PC-3 (cell line): ENCODE measurements at regions of chr19 and their contacts with region 1.

Region 1: DNA sequence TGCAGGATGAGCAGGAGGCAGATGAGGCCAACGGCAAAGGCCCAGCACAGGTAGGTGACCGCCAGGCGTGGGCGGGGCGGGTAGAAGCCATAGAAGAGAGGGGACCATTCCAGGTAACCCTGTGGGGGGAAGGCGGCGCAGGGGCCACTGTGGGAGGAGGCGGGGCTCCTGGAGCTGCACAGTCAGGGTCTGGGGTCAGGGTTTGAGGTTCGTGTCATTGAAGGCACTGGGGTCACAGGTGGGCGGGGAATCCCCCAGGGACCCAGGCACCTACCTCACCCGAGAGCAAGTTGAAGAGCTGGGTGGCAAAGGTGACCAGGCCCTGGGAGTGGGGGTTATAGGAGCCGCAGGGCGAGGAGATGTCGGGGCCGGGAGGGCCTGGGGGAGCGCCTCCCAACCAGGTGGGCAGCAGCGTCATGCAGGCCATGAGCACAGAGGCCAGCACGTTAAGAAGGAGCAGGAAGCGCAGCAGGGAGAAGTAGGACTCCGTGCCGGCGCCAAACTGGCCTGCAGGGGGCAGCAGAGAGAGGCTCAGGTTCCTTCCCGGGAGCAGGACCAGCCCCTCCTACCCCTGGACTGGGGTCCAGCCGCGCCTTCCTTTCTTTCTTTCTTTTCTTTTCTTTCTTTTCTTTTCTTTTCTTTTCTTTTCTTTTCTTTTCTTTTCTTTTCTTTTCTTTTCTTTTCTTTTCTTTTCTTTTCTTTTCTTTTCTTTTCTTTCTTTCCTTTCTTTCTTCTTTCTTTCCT is 4.6 kb downstream of the TMC4 start:
- DNase-seq: peak; percentile 95
- ATAC-seq: peak; percentile 61
- H3K4me3 ChIP-seq: no peak overlapping the region
- H3K27ac ChIP-seq: no peak overlapping the region
- H3K4me1 ChIP-seq: peaks cover 12% of the 10 kb centered on the region
- H3K27me3 ChIP-seq: no peaks in the 10 kb centered on the region
- CTCF ChIP-seq: peak; percentile 76

Region 2: DNA sequence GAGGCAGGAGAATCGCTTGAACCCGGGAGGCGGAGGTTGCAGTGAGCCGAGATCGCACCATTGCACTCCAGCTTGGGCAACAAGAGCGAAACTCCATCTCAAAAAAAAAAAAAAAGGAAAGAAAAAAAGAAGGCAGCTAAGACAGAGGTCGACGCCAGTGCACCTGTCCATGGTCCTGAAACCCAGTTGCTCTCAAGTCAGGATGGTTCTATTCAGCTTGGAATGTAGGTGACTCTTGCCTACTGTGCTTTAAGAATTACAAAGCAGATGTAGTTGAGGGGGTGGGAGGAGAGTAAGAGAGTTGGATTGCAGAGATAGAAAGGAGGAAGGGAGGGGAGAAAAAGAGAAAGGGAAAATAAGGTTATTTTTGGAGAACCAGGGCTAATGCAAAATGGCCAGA is 240.6 kb before region 1 on chr19:
- CTCF ChIA-PET with region 1: no interaction called
- POLR2A ChIA-PET with region 1: no interaction called
- intact Hi-C with region 1: no loop called
- DNase-seq: peak; percentile 78
- ATAC-seq: peak; percentile 54; the same call in 1 of the 2 replicates
- H3K4me3 ChIP-seq: no peak overlapping the region
- H3K27ac ChIP-seq: no peak overlapping the region
- H3K4me1 ChIP-seq: no peaks in the 10 kb centered on the region
- H3K27me3 ChIP-seq: peaks cover 8% of the 10 kb centered on the region
- CTCF ChIP-seq: no peak

Region 3: GRCh38 chr19:54081032-54081431 is 87.3 kb before region 1 on chr19 and contains the start of gene TARM1:
- CTCF ChIA-PET with region 1: no interaction called
- POLR2A ChIA-PET with region 1: no interaction called
- intact Hi-C with region 1: no loop called
- DNase-seq: no peak
- ATAC-seq: no peak
- H3K4me3 ChIP-seq: no peak within 1 kb of the TSS
- H3K27ac ChIP-seq: no peak within 1 kb of the TSS
- H3K4me1 ChIP-seq: no peaks in the 10 kb centered on the region
- H3K27me3 ChIP-seq: no peaks in the 10 kb centered on the region
- CTCF ChIP-seq: no peak
- total RNA-seq, gene TARM1: not detected in 2 replicates

Region 4: DNA sequence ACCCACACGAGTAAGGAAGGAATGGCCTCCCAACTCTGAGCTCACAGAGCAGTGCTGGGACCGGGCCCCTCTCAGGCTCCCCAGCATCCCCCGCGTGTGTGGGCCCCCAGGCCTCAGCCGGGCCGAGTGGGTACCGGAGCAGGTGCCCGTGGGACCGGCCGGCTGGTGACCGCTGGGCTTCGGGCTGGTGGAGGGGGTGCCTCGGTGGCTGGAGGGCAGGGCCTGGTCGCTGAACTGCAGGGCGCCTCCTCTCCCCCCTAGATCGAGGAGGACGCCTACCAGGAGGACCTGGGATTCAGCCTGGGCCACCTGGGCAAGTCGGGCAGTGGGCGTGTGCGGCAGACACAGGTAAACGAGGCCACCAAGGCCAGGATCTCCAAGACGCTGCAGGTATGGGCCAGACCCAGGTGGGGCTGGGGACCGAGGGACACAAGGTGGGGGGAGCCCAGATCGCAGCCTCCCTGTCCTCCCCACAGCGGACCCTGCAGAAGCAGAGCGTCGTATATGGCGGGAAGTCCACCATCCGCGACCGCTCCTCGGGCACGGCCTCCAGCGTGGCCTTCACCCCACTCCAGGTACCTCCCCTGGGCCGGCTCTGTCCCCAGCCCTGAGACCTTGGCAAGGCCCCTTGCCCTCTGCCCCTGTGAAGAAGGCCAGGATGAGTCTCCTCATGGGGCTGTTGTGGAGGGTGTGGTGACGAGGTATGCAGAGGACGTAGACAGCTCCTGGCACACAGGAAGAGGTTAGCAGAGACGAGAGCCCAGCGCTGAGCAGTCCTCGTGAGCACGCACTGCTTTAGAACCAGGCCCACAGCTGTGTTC is 39.3 kb before region 1 on chr19:
- CTCF ChIA-PET with region 1: no interaction called
- POLR2A ChIA-PET with region 1: interaction called, 11 read pairs
- intact Hi-C with region 1: no loop called
- DNase-seq: no peak
- ATAC-seq: no peak
- H3K4me3 ChIP-seq: no peak overlapping the region
- H3K27ac ChIP-seq: no peak overlapping the region
- H3K4me1 ChIP-seq: no peaks in the 10 kb centered on the region
- H3K27me3 ChIP-seq: no peaks in the 10 kb centered on the region
- CTCF ChIP-seq: no peak

Region 5: DNA sequence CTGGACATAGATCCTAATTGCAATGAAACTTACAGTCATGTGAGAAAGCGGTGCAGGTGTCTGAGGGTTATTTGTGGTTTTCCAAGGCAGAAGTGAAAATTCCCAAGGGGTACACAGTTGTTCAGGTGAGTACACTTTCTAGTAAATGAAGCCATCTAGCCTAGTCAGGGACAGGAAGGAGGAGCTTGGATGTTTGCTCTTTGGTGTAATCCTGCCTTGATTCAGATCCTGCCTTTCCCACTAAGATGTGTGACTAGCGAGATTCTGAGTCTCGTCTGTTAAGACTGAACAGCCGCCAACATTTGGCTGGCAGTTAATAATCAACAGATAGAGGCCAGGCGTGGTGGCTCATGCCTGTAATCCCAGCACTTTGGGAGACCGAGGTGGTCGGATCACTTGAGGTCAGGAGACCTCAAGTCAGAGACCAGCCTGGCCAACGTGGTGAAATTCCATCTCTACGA is 34.8 kb after region 1 on chr19:
- CTCF ChIA-PET with region 1: interaction called, 4 read pairs
- POLR2A ChIA-PET with region 1: interaction called, 19 read pairs
- intact Hi-C with region 1: loop called (anchors 5 kb)
- DNase-seq: peak; percentile 46
- ATAC-seq: peak; percentile 29
- H3K4me3 ChIP-seq: peak overlapping the region; percentile 96
- H3K27ac ChIP-seq: no peak overlapping the region
- H3K4me1 ChIP-seq: peaks cover 48% of the 10 kb centered on the region
- H3K27me3 ChIP-seq: no peaks in the 10 kb centered on the region
- CTCF ChIP-seq: no peak

Region 6: GRCh38 chr19:54231077-54231931 is 63.0 kb after region 1 on chr19:
- CTCF ChIA-PET with region 1: interaction called, 3 read pairs
- POLR2A ChIA-PET with region 1: no interaction called
- intact Hi-C with region 1: loop called (anchors 1 kb)
- DNase-seq: peak; percentile 93
- ATAC-seq: peak; percentile 98
- H3K4me3 ChIP-seq: no peak overlapping the region
- H3K27ac ChIP-seq: no peak overlapping the region
- H3K4me1 ChIP-seq: peaks cover 8% of the 10 kb centered on the region
- H3K27me3 ChIP-seq: peaks cover 10% of the 10 kb centered on the region; the same call in 1 of the 2 replicates
- CTCF ChIP-seq: peak; percentile 99